Naive thymus-derived CD4-positive, alpha-beta T cell (primary cell): ENCODE measurements at regions of chr6 and their contacts with region 1.

Region 1: DNA sequence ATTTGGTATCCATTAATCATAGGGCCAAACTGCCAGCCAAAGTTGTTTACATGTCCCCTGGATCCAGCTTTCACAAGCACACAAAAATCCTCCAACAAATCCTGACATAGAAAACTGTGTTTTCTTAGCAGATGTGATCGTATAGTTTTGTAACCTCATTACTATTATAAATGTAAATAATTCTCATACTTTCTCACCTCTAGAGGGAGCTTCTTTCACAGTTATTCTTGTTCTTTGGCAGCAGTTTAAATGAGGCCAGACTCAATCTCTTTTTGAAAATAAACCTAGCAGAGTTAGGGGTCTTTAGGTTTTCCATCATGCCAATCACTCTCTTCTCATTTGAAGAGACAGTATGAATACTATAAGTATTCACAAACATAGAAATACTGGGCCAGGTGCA is 17.0 kb upstream of the ZNF318 start:
- DNase-seq: peak in 3 of 9 donors; percentile 43 to 64 (median 44)
- ATAC-seq: no peak
- H3K4me3 ChIP-seq: no peak overlapping the region
- H3K4me3 Mint-ChIP-seq: peak overlapping the region in 4 of 10 donors; percentile 23 to 63 (median 40)
- H3K27ac ChIP-seq: no peak overlapping the region
- H3K27ac Mint-ChIP-seq: peak overlapping the region in 8 of 9 donors; percentile 6 to 95 (median 73)
- H3K4me1 ChIP-seq: peaks cover 46 to 59% of the 10 kb centered on the region in 2 donors
- H3K4me1 Mint-ChIP-seq: peaks cover 54 to 78% (median 72%) of the 10 kb centered on the region in 7 donors
- H3K27me3 ChIP-seq: no peaks in the 10 kb centered on the region
- H3K27me3 Mint-ChIP-seq: peaks cover 0 to 67% (median 4%) of the 10 kb centered on the region in 5 donors

Region 2: GRCh38 chr6:42907336-42907735 is 479.2 kb before region 1 on chr6:
- CTCF ChIA-PET with region 1: no interaction called
- POLR2A ChIA-PET with region 1: no interaction called
- intact Hi-C with region 1: no loop called
- DNase-seq: no peak
- ATAC-seq: no peak
- H3K4me3 ChIP-seq: no peak overlapping the region
- H3K4me3 Mint-ChIP-seq: no peak overlapping the region
- H3K27ac ChIP-seq: no peak overlapping the region
- H3K27ac Mint-ChIP-seq: no peak overlapping the region
- H3K4me1 ChIP-seq: no peaks in the 10 kb centered on the region
- H3K4me1 Mint-ChIP-seq: peaks cover 0 to 6% (median 4%) of the 10 kb centered on the region in 7 donors
- H3K27me3 ChIP-seq: no peaks in the 10 kb centered on the region
- H3K27me3 Mint-ChIP-seq: peaks cover 4 to 14% (median 5%) of the 10 kb centered on the region in 5 donors

Region 3: GRCh38 chr6:43496370-43497128 is 110.1 kb after region 1 on chr6:
- CTCF ChIA-PET with region 1: interaction called, 3 read pairs
- POLR2A ChIA-PET with region 1: no interaction called
- intact Hi-C with region 1: loop called in 1 of 2 experiments (anchors 1 kb)
- DNase-seq: no peak
- ATAC-seq: no peak
- H3K4me3 ChIP-seq: no peak overlapping the region
- H3K4me3 Mint-ChIP-seq: no peak overlapping the region
- H3K27ac ChIP-seq: peak overlapping the region; percentile 36
- H3K27ac Mint-ChIP-seq: peak overlapping the region in 1 of 9 donors; percentile 38
- H3K4me1 ChIP-seq: peaks cover 12 to 15% of the 10 kb centered on the region in 2 donors
- H3K4me1 Mint-ChIP-seq: peaks cover 15 to 38% (median 27%) of the 10 kb centered on the region in 7 donors
- H3K27me3 ChIP-seq: no peaks in the 10 kb centered on the region
- H3K27me3 Mint-ChIP-seq: no peaks in the 10 kb centered on the region

Region 4: DNA sequence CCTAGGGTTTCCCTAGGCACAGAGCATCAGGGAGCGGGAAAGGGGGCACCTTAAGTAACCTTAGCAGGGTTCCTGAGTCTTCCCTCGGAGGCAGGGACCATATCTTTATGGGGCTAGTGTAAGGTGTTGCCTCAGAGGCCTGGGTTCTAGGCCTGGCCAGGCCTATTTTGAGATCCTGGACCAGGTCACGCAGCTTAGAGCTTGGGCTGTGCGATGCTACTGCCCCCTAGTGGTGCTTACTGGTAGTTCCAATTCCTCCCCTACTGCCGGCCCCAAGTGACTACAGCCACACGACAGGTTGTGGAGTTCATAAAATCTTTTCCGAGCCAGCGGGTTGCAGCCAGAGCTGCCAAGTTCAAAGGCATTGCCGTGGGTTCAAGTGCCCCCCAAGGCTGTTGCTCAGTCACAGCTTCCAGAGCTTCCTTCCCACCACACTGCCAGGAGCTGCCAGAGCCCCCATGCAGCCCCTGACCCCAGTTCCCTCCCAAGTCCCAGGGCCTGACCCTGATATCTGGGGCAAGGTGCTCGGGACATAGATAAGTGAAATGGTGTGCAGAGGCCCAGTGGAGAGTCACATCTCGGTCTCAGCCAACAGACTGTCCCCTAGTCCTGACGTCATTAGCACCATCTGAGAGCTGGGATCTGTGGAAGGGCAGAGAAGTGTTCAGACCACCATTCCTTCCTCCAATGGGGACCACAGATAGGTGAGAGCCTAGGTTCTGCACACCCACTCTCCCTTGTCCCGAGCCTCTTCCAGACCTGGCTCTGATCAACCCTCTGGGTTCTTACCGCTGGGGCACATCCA is 120.4 kb after region 1 on chr6:
- CTCF ChIA-PET with region 1: interaction called, 8 read pairs
- POLR2A ChIA-PET with region 1: no interaction called
- intact Hi-C with region 1: loop called (anchors 1 to 2 kb)
- DNase-seq: peak; percentile 61 to 82 (median 70)
- ATAC-seq: peak; percentile 84
- H3K4me3 ChIP-seq: no peak overlapping the region
- H3K4me3 Mint-ChIP-seq: peak overlapping the region in 1 of 10 donors; percentile 29
- H3K27ac ChIP-seq: no peak overlapping the region
- H3K27ac Mint-ChIP-seq: peak overlapping the region in 5 of 9 donors; percentile 24 to 69 (median 58)
- H3K4me1 ChIP-seq: peaks cover 0 to 4% of the 10 kb centered on the region in 2 donors
- H3K4me1 Mint-ChIP-seq: peaks cover 10 to 29% (median 20%) of the 10 kb centered on the region in 7 donors
- H3K27me3 ChIP-seq: peaks cover 0 to 9% of the 10 kb centered on the region in 2 donors
- H3K27me3 Mint-ChIP-seq: peaks cover 15 to 22% (median 19%) of the 10 kb centered on the region in 5 donors